Right ventricle myocardium inferior (tissue), 1 donor: ENCODE measurements at regions of chr17 and their contacts with region 1.

Region 1: GRCh38 chr17:68613739-68614298 is 12.7 kb upstream of the FAM20A start:
- DNase-seq: no peak
- ATAC-seq: peak; percentile 39

Region 2: GRCh38 chr17:68468334-68468733 is 145.5 kb before region 1 on chr17:
- intact Hi-C with region 1: loop called (anchors 5 kb)
- DNase-seq: no peak
- ATAC-seq: peak; percentile 84

Region 3: GRCh38 chr17:68835071-68835470 is 221.3 kb after region 1 on chr17:
- intact Hi-C with region 1: no loop called
- DNase-seq: no peak
- ATAC-seq: no peak